ENCODE measurements at regions of chr1 and their contacts with region 1.

Region 1: GRCh38 chr1:155208541-155209311 is at the start of gene MTX1:
- DNase-seq: peak; percentile 77 to 94 (median 88)
- ATAC-seq: peak; percentile 84
- H3K4me3 ChIP-seq: peak within 1 kb of the TSS; percentile 79 to 86
- H3K4me3 Mint-ChIP-seq: peak within 1 kb of the TSS; percentile 86
- H3K27ac ChIP-seq: peak within 1 kb of the TSS; percentile 99
- H3K27ac Mint-ChIP-seq: peak within 1 kb of the TSS; percentile 95
- H3K4me1 ChIP-seq: peaks cover 22% of the 10 kb centered on the region
- H3K4me1 Mint-ChIP-seq: peaks cover 20% of the 10 kb centered on the region
- H3K27me3 ChIP-seq: no peaks in the 10 kb centered on the region
- H3K27me3 Mint-ChIP-seq: no peaks in the 10 kb centered on the region
- CTCF ChIP-seq: no peak
- total RNA-seq, gene MTX1: 24.4 to 25.8 TPM

Region 2: GRCh38 chr1:154940651-154941194 is 268.0 kb before region 1 on chr1:
- CTCF ChIA-PET with region 1: no interaction called
- POLR2A ChIA-PET with region 1: no interaction called
- intact Hi-C with region 1: no loop called
- DNase-seq: peak in 1 of 9 experiments; percentile 27
- ATAC-seq: no peak
- H3K4me3 ChIP-seq: no peak overlapping the region
- H3K4me3 Mint-ChIP-seq: no peak overlapping the region
- H3K27ac ChIP-seq: no peak overlapping the region
- H3K27ac Mint-ChIP-seq: peak overlapping the region; percentile 23
- H3K4me1 ChIP-seq: peaks cover 52% of the 10 kb centered on the region
- H3K4me1 Mint-ChIP-seq: peaks cover 66% of the 10 kb centered on the region
- H3K27me3 ChIP-seq: no peaks in the 10 kb centered on the region
- H3K27me3 Mint-ChIP-seq: no peaks in the 10 kb centered on the region
- CTCF ChIP-seq: no peak

Region 3: DNA sequence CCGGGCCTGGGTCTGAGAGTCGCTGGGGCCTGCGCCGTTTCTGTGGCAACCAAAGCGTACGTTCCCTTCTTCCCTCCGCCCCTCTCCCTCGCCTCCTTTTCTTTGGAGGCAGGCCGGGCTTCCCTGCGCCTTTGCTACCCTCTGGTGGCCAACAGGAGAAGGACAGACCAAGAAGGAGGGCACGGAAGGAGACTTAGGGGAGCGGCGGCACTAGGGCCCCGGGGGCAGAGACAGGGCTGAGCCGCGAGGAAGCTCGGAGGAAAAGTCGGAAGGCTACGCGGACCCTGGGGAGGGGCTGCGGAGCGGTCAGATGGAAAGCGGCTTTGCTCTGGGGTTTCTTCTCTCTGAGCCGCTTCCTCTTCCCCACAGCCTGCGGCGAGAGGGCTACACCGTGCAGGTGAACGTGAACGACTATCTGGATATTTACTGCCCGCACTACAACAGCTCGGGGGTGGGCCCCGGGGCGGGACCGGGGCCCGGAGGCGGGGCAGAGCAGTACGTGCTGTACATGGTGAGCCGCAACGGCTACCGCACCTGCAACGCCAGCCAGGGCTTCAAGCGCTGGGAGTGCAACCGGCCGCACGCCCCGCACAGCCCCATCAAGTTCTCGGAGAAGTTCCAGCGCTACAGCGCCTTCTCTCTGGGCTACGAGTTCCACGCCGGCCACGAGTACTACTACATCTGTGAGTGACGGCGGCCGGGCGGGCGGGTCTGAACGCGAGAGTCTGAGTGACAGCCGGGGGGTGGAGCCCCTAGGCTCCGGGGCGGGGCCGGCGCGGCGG is 123.8 kb before region 1 on chr1:
- CTCF ChIA-PET with region 1: no interaction called
- POLR2A ChIA-PET with region 1: no interaction called
- intact Hi-C with region 1: no loop called
- DNase-seq: peak; percentile 80 to 94 (median 92)
- ATAC-seq: peak; percentile 73
- H3K4me3 ChIP-seq: peak overlapping the region; percentile 82 to 92
- H3K4me3 Mint-ChIP-seq: peak overlapping the region; percentile 95
- H3K27ac ChIP-seq: peak overlapping the region; percentile 57 to 85
- H3K27ac Mint-ChIP-seq: peak overlapping the region; percentile 90
- H3K4me1 ChIP-seq: peaks cover 54% of the 10 kb centered on the region
- H3K4me1 Mint-ChIP-seq: peaks cover 39% of the 10 kb centered on the region
- H3K27me3 ChIP-seq: peaks cover 39 to 44% of the 10 kb centered on the region in 2 experiments
- H3K27me3 Mint-ChIP-seq: peaks cover 30% of the 10 kb centered on the region
- CTCF ChIP-seq: peak; percentile 84

Region 4: DNA sequence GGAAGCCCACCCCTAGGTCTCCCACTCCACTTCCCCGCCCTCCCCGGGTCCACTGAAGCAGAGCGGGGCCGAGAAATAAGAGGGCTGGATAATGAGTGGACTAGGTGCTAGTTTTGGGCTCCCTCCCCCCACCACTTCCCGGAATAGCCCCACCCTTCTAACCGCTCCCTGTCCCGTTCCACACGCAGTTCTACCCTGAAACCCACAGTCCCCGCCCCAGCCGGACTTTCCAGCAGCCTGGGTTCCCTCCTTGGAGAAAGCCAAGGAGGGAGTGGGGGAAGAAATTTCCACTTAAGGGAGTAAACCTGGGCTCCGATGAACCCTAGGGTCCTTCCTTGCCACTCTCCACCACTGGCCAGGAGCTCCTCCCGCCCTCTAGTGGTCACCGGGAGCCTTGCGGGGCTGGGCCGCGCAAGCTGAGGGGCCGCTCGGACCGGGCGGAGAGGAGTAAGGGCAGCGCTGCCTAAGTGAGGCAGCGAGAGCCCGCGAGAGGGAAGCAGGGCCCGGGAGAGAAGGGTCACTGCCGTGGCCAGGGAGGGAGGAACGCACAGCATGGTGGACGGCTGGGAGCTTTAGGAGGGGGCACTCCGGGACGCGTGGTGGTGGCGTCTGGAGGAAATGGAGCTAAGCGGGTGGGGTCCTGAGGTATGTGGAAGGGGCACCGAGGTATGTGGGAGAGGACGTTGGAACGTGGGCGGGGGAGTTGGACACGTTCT is 15.3 kb before region 1 on chr1:
- CTCF ChIA-PET with region 1: interaction called, 47 read pairs
- POLR2A ChIA-PET with region 1: interaction called, 19 read pairs
- intact Hi-C with region 1: loop called in 1 of 2 experiments (anchors 1 kb)
- DNase-seq: peak in 8 of 9 experiments; percentile 57 to 84 (median 73)
- ATAC-seq: peak; percentile 14
- H3K4me3 ChIP-seq: peak overlapping the region; percentile 57 to 85
- H3K4me3 Mint-ChIP-seq: peak overlapping the region; percentile 85
- H3K27ac ChIP-seq: peak overlapping the region; percentile 87 to 89
- H3K27ac Mint-ChIP-seq: peak overlapping the region; percentile 98
- H3K4me1 ChIP-seq: peaks cover 24% of the 10 kb centered on the region
- H3K4me1 Mint-ChIP-seq: peaks cover 30% of the 10 kb centered on the region
- H3K27me3 ChIP-seq: no peaks in the 10 kb centered on the region
- H3K27me3 Mint-ChIP-seq: no peaks in the 10 kb centered on the region
- CTCF ChIP-seq: peak; percentile 87

Region 5: GRCh38 chr1:155227261-155228095 is 18.8 kb after region 1 on chr1:
- CTCF ChIA-PET with region 1: interaction called, 141 read pairs
- POLR2A ChIA-PET with region 1: interaction called, 24 read pairs
- intact Hi-C with region 1: loop called (anchors 1 kb)
- DNase-seq: peak; percentile 95 to 100 (median 98)
- ATAC-seq: peak; percentile 95
- H3K4me3 ChIP-seq: peak overlapping the region; percentile 71 to 74
- H3K4me3 Mint-ChIP-seq: peak overlapping the region; percentile 88
- H3K27ac ChIP-seq: peak overlapping the region; percentile 70 to 86
- H3K27ac Mint-ChIP-seq: peak overlapping the region; percentile 85
- H3K4me1 ChIP-seq: peaks cover 18% of the 10 kb centered on the region
- H3K4me1 Mint-ChIP-seq: peaks cover 24% of the 10 kb centered on the region
- H3K27me3 ChIP-seq: no peaks in the 10 kb centered on the region
- H3K27me3 Mint-ChIP-seq: no peaks in the 10 kb centered on the region
- CTCF ChIP-seq: no peak

Region 6: GRCh38 chr1:155277070-155277895 is 68.6 kb after region 1 on chr1 and contains the start of gene HCN3:
- CTCF ChIA-PET with region 1: interaction called, 3 read pairs
- POLR2A ChIA-PET with region 1: no interaction called
- intact Hi-C with region 1: loop called in 1 of 2 experiments (anchors 2 kb)
- DNase-seq: peak; percentile 65 to 96 (median 92)
- ATAC-seq: peak; percentile 47
- H3K4me3 ChIP-seq: peak within 1 kb of the TSS; percentile 57 to 70
- H3K4me3 Mint-ChIP-seq: peak within 1 kb of the TSS; percentile 79
- H3K27ac ChIP-seq: peak within 1 kb of the TSS; percentile 20 to 31
- H3K27ac Mint-ChIP-seq: peak within 1 kb of the TSS; percentile 32
- H3K4me1 ChIP-seq: peaks cover 29% of the 10 kb centered on the region
- H3K4me1 Mint-ChIP-seq: peaks cover 35% of the 10 kb centered on the region
- H3K27me3 ChIP-seq: no peaks in the 10 kb centered on the region
- H3K27me3 Mint-ChIP-seq: no peaks in the 10 kb centered on the region
- CTCF ChIP-seq: peak; percentile 64
- total RNA-seq, gene HCN3: 1.3 TPM

Region 7: DNA sequence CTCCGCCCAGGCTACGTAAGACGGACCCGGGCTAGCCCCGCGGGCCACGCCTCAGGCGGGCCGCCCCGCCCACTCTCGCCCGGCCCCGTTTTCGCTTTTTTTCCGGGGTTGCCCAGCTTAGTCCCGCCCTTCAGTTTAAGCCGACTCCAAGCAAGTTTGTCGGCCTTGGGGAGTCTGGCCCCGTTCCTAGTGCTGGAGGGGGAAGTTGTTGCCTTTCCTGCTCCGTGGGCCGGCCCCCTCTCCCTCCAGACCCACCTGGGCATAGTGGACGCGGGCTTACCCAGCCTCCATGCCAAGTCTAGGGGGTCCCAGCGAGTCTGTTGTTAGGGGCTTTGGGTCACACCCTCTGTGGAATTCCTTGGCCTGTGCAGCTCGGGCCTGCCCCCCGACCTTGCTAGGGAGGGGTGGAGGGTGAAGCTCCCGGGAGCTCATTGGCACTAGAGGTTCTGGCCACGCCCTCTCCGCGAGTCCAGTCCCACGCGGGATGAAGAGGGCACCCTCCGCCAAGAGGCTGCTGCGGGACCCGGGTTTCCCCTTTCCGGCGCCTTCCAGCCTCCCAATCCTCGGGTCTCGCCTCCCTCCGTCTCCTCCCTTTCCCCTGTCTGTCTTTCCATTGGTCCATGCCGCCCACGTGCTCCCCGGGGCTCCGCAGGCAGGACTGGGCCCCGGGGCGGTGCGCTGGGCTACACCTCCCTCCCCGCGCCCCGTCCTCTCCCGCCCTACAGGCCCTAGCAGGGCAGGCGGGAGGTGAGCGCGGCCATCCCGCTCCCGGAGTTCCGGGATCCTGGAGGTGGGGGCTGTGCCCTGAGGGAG is 115.3 kb after region 1 on chr1:
- CTCF ChIA-PET with region 1: interaction called, 4 read pairs
- POLR2A ChIA-PET with region 1: no interaction called
- intact Hi-C with region 1: loop called (anchors 5 kb)
- DNase-seq: peak; percentile 66 to 94 (median 85)
- ATAC-seq: peak; percentile 81
- H3K4me3 ChIP-seq: peak overlapping the region; percentile 89 to 100
- H3K4me3 Mint-ChIP-seq: peak overlapping the region; percentile 90
- H3K27ac ChIP-seq: peak overlapping the region; percentile 69 to 90
- H3K27ac Mint-ChIP-seq: peak overlapping the region; percentile 55
- H3K4me1 ChIP-seq: peaks cover 34% of the 10 kb centered on the region
- H3K4me1 Mint-ChIP-seq: peaks cover 33% of the 10 kb centered on the region
- H3K27me3 ChIP-seq: no peaks in the 10 kb centered on the region
- H3K27me3 Mint-ChIP-seq: no peaks in the 10 kb centered on the region
- CTCF ChIP-seq: no peak

Region 8: GRCh38 chr1:155591770-155592169 is 383.0 kb after region 1 on chr1:
- CTCF ChIA-PET with region 1: interaction called, 9 read pairs
- POLR2A ChIA-PET with region 1: no interaction called
- intact Hi-C with region 1: loop called in 1 of 2 experiments (anchors 1 kb)
- DNase-seq: peak in 5 of 9 experiments; percentile 11 to 78 (median 31)
- ATAC-seq: peak; percentile 77
- H3K4me3 ChIP-seq: no peak overlapping the region
- H3K4me3 Mint-ChIP-seq: no peak overlapping the region
- H3K27ac ChIP-seq: no peak overlapping the region
- H3K27ac Mint-ChIP-seq: no peak overlapping the region
- H3K4me1 ChIP-seq: no peaks in the 10 kb centered on the region
- H3K4me1 Mint-ChIP-seq: peaks cover 3% of the 10 kb centered on the region
- H3K27me3 ChIP-seq: no peaks in the 10 kb centered on the region
- H3K27me3 Mint-ChIP-seq: no peaks in the 10 kb centered on the region
- CTCF ChIP-seq: peak; percentile 64

Region 9: DNA sequence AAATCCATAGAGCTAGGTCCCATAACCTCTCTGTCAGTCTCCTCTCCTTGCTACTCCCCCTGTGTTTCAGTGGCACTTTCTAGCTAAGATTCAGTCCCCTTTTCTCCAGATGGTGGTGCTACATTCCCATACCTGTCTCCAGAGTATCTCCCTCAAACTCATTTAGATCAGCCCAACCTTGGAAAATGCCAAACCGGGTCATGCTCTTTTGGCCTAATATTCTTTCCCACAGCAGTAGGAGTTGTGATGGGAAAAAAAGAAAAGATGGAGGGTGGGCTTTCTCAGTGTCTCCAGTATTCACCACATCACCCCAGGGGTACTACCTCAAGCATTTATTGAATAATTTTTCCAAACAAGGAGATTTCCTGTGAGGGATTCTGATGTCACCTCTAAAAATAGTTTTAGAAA is 729.5 kb after region 1 on chr1:
- CTCF ChIA-PET with region 1: no interaction called
- POLR2A ChIA-PET with region 1: no interaction called
- intact Hi-C with region 1: no loop called
- DNase-seq: peak in 3 of 9 experiments; percentile 16 to 75 (median 64)
- ATAC-seq: no peak
- H3K4me3 ChIP-seq: no peak overlapping the region
- H3K4me3 Mint-ChIP-seq: no peak overlapping the region
- H3K27ac ChIP-seq: no peak overlapping the region
- H3K27ac Mint-ChIP-seq: peak overlapping the region; percentile 8
- H3K4me1 ChIP-seq: peaks cover 29% of the 10 kb centered on the region
- H3K4me1 Mint-ChIP-seq: peaks cover 27% of the 10 kb centered on the region
- H3K27me3 ChIP-seq: no peaks in the 10 kb centered on the region
- H3K27me3 Mint-ChIP-seq: no peaks in the 10 kb centered on the region
- CTCF ChIP-seq: peak; percentile 51

Measured in CD8-positive, alpha-beta T cell (primary cell).